PC-3 (cell line): ENCODE measurements at regions of chr20 and their contacts with region 1.

Region 1: DNA sequence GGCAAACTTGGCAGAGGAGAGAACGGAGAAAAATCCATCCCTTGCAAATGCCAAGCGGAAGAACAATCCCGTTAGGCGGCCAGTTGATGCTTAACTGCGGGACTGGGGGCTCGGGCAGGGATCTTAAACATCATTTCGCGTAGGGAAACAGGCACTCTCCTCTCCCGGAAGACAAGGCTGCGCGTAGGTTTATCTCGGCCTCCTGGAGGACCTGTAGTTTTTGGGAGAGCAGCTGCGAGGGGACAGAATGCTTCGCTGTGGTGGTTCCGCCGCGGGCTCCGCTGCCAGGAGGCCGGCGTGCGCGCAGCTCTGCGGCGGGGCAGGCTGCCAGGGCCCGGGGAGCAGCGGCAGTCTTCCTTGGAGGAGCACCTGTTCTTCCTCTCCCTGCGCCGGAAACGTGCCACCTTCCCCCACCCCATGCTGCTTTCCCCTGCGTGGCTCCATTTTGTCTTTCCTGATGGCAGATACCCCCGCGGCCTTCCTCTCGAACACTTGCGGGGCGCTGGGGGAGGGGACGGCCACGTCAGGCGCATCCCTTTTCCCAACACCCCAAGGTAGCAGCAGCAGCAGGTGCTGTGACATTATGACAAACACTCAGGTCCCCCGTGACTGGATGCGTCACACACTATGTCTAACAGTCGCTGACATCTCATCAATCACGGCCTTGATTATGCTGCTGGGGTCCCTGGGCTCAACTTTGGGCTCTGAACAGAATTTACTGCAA is 230.7 kb upstream of the BTBD3 start:
- DNase-seq: peak; percentile 25
- ATAC-seq: peak; percentile 24; the same call in 1 of the 2 replicates
- H3K4me3 ChIP-seq: peak overlapping the region; percentile 56
- H3K27ac ChIP-seq: 0 out of 2 replicates have a peak overlapping the region, but pooled peaks have one; percentile 2
- H3K4me1 ChIP-seq: peaks cover 18% of the 10 kb centered on the region
- H3K27me3 ChIP-seq: peaks cover 5% of the 10 kb centered on the region; the same call in 1 of the 2 replicates
- CTCF ChIP-seq: no peak

Region 2: GRCh38 chr20:11401988-11402387 is 285.0 kb before region 1 on chr20:
- CTCF ChIA-PET with region 1: no interaction called
- POLR2A ChIA-PET with region 1: no interaction called
- intact Hi-C with region 1: no loop called
- DNase-seq: no peak
- ATAC-seq: no peak; the same call in 1 of the 2 replicates
- H3K4me3 ChIP-seq: peak overlapping the region; percentile 52
- H3K27ac ChIP-seq: no peak overlapping the region
- H3K4me1 ChIP-seq: no peaks in the 10 kb centered on the region
- H3K27me3 ChIP-seq: no peaks in the 10 kb centered on the region
- CTCF ChIP-seq: no peak

Region 3: GRCh38 chr20:11654766-11655165 is 32.2 kb before region 1 on chr20:
- CTCF ChIA-PET with region 1: no interaction called
- POLR2A ChIA-PET with region 1: no interaction called
- intact Hi-C with region 1: no loop called
- DNase-seq: no peak
- ATAC-seq: no peak
- H3K4me3 ChIP-seq: no peak overlapping the region
- H3K27ac ChIP-seq: no peak overlapping the region
- H3K4me1 ChIP-seq: no peaks in the 10 kb centered on the region
- H3K27me3 ChIP-seq: peaks cover 41% of the 10 kb centered on the region
- CTCF ChIP-seq: no peak

Region 4: GRCh38 chr20:11901127-11901526 is 214.1 kb after region 1 on chr20:
- CTCF ChIA-PET with region 1: no interaction called
- POLR2A ChIA-PET with region 1: no interaction called
- intact Hi-C with region 1: loop called (anchors 10 kb)
- DNase-seq: peak; percentile 88
- ATAC-seq: peak; percentile 88
- H3K4me3 ChIP-seq: no peak overlapping the region
- H3K27ac ChIP-seq: peak overlapping the region; percentile 40
- H3K4me1 ChIP-seq: peaks cover 33% of the 10 kb centered on the region
- H3K27me3 ChIP-seq: no peaks in the 10 kb centered on the region
- CTCF ChIP-seq: no peak